CD8-positive, alpha-beta T cell (primary cell): ENCODE measurements at regions of chr14 and their contacts with region 1.

Region 1: DNA sequence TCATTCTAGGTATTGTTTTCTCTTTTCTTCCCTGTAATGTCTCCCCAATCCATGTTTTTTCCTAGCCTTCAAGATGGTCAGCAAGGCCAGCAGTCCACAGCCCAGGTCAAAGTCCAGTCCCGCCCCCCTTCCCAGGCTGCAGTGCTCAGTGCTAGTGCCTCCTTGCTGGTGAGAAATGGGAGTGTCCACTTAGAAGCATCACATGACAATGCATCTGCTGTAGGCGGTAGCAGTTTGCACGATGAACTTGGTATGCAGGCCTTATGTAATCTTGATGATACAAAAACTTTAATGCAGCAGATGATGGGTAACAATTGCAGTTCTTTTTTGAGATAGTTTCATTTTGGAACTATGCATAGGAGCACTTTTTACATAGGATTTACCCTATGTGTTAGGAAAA is 88.4 kb downstream of the PCNX1 start:
- DNase-seq: no peak
- ATAC-seq: no peak
- H3K4me3 ChIP-seq: peak overlapping the region in 1 of 2 experiments; percentile 23
- H3K4me3 Mint-ChIP-seq: no peak overlapping the region
- H3K27ac ChIP-seq: no peak overlapping the region
- H3K27ac Mint-ChIP-seq: peak overlapping the region; percentile 9
- H3K4me1 ChIP-seq: peaks cover 55% of the 10 kb centered on the region
- H3K4me1 Mint-ChIP-seq: peaks cover 64% of the 10 kb centered on the region
- H3K27me3 ChIP-seq: no peaks in the 10 kb centered on the region
- H3K27me3 Mint-ChIP-seq: no peaks in the 10 kb centered on the region
- CTCF ChIP-seq: no peak

Region 2: DNA sequence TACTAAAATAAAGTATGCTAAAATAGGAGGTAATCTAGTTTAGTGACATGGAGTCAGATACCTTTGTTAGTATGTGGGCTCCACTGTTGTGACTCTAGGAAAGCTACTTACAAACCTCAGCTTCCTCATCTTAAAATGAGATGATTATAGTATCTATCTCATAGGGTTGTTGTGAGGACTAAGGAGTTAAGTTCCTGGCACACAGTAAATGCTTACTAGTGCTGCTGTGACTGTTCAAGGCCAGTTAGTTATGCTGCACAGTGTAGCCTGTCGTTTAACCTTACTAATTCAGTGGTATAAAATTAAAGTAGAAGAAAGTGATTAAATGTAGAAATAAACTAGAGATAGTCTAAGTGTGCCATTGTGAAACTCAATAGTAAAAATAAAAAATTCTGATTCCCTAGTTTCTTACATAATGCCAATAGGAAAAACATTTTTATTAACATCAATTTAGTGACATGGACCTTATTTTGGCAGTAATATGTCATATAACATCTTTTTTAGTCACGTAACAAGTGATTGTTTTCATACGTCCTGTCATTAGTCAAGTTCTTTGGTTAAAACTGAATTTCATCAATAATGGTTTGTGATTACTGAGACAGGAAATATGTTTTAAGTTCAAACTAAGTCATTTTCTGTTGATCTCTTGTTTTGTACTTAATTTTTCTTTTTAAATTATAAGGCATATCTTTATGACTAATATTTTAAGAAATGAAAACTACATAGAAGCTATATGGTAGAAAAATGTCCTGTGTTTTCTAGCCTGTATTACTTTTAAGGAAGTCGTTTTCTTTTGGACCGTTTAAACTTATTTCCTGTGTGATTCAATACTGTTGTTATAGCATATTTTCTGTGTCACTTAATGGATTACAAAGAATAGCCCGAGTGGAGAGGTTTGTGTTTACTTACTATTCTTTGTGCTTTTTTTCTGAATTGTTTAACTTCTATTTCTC is 14.4 kb before region 1 on chr14:
- CTCF ChIA-PET with region 1: interaction called, 5 read pairs
- POLR2A ChIA-PET with region 1: interaction called, 6 read pairs
- intact Hi-C with region 1: loop called in 1 of 2 experiments (anchors 2 kb)
- DNase-seq: peak in 1 of 9 experiments; percentile 37
- ATAC-seq: peak; percentile 59
- H3K4me3 ChIP-seq: peak overlapping the region in 1 of 2 experiments; percentile 1
- H3K4me3 Mint-ChIP-seq: peak overlapping the region; percentile 59
- H3K27ac ChIP-seq: peak overlapping the region in 1 of 2 experiments; percentile 60
- H3K27ac Mint-ChIP-seq: peak overlapping the region; percentile 88
- H3K4me1 ChIP-seq: peaks cover 32% of the 10 kb centered on the region
- H3K4me1 Mint-ChIP-seq: peaks cover 63% of the 10 kb centered on the region
- H3K27me3 ChIP-seq: no peaks in the 10 kb centered on the region
- H3K27me3 Mint-ChIP-seq: no peaks in the 10 kb centered on the region
- CTCF ChIP-seq: no peak